ENCODE measurements at regions of chr11 and their contacts with region 1.

Region 1: DNA sequence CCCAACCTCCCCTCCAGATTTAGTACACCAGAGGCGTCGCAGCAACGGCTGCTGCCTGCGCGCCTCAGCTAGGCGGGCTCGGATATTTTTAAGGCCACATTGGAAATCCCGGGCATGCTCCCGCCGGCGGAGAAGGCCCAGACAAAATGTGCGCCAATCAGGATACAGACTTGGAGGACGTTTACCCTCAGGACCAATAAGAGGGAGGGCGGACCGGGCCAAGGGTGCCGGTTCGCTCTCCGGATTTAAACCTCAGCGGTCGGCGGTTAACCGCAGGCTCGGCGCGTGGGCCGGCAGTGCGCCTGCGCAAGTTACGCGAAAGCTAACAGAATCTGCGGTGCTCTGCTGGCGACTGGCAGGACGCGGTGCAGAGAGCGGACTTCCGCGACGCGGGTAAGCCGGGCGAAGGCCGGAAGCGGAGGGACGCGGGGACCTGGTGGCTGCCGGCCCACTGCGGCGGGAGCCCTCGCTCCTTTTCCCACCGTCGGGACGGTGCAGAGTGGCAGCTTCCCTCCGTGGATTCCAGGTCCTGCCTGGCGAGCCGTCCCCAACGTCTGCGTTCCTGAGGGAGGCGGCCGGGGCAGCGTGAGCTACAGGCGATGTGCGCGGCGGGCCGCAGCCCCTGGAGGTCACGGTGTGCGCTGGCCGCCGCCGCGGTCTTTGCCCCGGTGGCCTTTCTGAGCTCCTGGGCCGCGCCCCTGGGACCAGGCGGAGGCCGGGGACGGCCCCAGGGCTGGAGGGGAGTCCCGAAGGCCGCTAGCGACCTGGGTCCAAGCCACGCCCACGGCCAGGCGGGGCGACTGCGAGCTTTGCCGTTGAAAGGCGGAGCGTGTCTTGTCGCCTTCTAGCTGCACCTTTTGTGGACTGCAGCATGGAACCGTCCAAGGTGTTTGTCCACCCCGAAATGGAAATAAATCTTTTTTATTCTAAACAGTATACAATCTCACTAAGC is at the start of gene HYLS1:
- DNase-seq: peak; percentile 97
- ATAC-seq: peak; percentile 84
- H3K4me3 Mint-ChIP-seq: peak within 1 kb of the TSS; percentile 90
- H3K27ac Mint-ChIP-seq: peak within 1 kb of the TSS; percentile 98
- H3K4me1 Mint-ChIP-seq: peaks cover 18% of the 10 kb centered on the region
- H3K27me3 Mint-ChIP-seq: peaks cover 3% of the 10 kb centered on the region
- CTCF ChIP-seq: no peak
- total RNA-seq, gene HYLS1: 9.0 TPM in 2 replicates

Region 2: DNA sequence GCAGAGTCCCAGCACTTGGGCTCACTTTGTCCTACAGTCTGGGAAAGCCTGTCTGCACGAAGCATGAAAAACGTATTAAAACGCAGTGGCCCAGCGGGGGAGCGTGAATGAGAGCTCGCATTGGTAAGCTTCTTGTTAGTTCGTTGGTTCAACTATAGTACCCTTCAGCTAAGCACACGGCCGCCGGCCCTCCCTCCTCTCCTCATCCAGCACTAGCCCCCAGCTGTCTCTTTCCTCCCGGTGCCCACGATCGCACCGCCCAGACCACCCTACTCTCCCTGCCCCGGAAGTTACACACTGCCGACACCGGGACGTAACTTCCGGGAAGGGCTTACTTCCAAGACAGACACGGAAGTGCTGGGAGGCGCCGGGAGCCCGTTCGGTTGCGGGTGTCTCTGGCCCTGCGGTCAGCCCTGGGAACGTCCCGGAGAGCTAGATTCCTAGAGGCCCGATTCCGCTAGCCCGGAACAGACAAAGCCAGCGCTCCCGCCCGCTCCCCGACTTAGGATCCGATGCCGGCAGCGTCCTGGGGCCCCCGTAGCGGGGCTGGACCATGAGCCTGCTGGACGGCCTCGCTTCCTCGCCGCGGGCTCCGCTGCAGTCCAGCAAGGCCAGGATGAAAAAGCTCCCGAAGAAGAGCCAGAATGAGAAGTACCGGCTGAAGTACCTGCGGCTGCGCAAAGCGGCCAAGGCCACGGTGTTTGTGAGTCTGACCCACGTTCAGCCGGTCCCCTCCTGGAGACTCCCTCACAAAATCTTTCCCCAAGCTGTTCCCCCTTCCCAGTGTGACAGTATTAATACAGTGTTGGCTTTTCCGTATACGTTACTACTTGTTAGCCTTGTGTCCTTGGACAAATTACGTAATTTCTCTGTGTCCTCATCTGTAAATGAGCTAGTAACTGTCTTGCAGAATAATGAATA is 1264.9 kb before region 1 on chr11 and contains the start of gene TBRG1:
- CTCF ChIA-PET with region 1: no interaction called
- POLR2A ChIA-PET with region 1: interaction called, 4 read pairs
- intact Hi-C with region 1: loop called (anchors 2 kb)
- DNase-seq: peak; percentile 71
- ATAC-seq: peak; percentile 97
- H3K4me3 Mint-ChIP-seq: peak within 1 kb of the TSS; percentile 94
- H3K27ac Mint-ChIP-seq: peak within 1 kb of the TSS; percentile 91
- H3K4me1 Mint-ChIP-seq: peaks cover 27% of the 10 kb centered on the region
- H3K27me3 Mint-ChIP-seq: peaks cover 22% of the 10 kb centered on the region
- CTCF ChIP-seq: no peak
- total RNA-seq, gene TBRG1: 43.7 and 54.6 TPM in 2 replicates

Region 3: DNA sequence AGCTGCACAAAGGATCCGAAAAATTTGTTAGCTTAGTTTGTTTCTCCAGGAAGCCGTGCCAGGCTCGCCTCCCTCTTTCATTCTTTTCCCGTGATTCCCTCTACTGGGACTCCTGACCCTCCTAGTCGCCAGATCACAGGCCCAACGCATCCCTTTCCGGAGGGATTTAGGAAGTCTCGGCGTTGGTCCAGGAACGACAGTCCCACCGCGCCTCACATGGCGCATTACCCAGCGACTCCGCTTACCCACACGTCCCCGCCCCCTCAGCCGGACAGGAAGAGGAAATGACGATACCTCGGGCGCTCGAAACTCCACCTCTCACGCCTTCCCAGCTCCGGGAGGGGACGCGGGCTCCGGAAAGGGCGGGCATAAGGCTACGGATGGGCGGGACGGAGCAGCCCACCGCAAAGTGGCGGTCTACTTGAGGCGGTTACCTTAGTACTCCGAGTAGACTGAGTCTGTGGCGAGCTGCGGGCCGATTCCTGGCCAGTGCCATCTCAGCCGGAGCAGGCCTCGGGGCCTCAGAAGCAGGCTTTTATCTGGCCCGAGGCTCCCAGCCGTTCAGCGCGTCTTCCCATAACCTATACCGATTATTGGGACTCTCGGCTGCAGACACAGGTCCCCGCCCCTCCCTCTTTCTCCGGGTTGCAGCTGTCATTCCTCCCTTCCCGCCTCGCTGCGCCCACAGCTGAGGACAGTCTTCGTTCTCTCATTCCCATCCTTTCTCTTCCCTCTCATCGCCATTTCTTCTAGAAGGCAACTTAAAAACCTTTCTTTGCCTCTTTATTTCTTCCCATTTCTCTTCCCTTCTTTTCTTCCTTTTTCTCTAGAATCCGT is 933.7 kb before region 1 on chr11 and contains the start of gene CCDC15:
- CTCF ChIA-PET with region 1: no interaction called
- POLR2A ChIA-PET with region 1: interaction called, 8 read pairs
- intact Hi-C with region 1: loop called (anchors 5 kb)
- DNase-seq: peak; percentile 88
- ATAC-seq: peak; percentile 100
- H3K4me3 Mint-ChIP-seq: no peak within 1 kb of the TSS
- H3K27ac Mint-ChIP-seq: no peak within 1 kb of the TSS
- H3K4me1 Mint-ChIP-seq: no peaks in the 10 kb centered on the region
- H3K27me3 Mint-ChIP-seq: peaks cover 4% of the 10 kb centered on the region
- CTCF ChIP-seq: no peak
- total RNA-seq, gene CCDC15: 0.51 and 0.71 TPM in 2 replicates

Region 4: DNA sequence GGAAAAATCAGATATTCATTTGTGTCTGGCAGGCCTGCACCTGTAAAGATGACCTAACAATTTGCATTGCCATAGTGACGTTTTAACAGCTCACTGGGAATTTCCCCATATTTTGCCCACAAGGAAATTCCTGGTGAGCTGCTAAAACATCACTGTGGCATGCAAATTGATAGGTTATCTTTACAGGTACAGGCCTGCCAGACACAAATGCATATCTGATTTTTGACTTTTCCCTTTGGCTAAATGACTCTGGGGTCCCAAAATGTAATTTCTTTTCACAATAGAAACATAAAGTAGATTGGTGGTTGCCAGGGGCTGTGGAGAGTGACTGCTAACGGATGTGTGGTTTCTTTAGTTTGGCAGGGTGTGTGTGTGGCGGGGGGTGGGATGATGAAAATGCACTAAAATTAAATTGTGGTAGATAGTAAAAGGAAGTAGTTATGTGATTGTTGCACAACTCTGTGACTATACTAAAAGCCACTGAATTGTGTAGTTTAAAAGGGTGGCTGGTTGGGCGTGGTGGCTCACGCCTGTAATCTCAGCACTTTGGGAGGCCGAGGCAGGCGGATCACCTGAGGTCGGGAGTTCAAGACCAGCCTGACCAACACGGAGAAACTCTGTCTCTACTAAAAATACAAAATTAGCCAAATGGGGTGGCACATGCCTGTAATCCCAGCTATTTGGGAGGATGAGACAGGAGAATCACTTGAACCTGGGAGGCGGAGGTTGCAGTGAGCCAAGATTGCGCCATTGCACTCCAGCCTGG is 373.1 kb before region 1 on chr11:
- CTCF ChIA-PET with region 1: no interaction called
- POLR2A ChIA-PET with region 1: interaction called, 5 read pairs
- intact Hi-C with region 1: loop called (anchors 1 kb)
- DNase-seq: peak; percentile 27
- ATAC-seq: peak; percentile 80
- H3K4me3 Mint-ChIP-seq: peak overlapping the region; percentile 21
- H3K27ac Mint-ChIP-seq: peak overlapping the region; percentile 92
- H3K4me1 Mint-ChIP-seq: peaks cover 45% of the 10 kb centered on the region
- H3K27me3 Mint-ChIP-seq: no peaks in the 10 kb centered on the region
- CTCF ChIP-seq: no peak

Region 5: DNA sequence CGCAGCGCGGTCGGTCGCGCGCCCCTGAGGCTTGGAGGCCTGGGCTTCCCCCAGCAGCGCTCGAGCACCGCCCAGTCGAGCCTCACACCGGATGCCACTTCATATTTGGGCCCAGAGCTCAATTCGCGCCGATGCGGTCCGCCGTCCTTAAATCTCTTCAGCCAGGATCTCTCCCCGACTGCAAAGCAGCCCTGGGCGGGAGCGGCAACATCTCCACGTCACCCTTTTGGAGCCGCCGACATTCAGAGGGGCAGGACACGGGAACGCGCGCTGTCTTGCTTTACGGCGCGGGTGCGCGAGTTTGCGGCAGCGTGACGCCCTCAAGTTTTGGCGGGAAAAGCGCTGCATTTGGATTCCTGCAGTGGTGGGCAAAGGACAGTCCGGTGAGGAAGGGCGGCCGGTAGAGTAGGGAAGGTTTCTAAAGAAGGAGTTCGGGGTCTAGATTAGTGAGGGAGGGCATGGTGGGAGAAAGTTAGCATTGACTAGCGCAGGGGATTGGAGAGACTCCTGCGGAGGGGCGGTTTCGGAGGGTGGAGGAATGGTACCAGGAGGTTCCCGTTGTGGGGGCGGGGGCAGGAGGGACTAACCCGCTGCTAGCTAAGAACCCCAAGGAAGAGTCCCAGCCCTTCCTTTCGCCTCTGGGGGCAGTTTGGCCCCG is 261.9 kb before region 1 on chr11:
- CTCF ChIA-PET with region 1: interaction called, 3 read pairs
- POLR2A ChIA-PET with region 1: interaction called, 15 read pairs
- intact Hi-C with region 1: loop called (anchors 1 kb)
- DNase-seq: peak; percentile 80
- ATAC-seq: peak; percentile 93
- H3K4me3 Mint-ChIP-seq: peak overlapping the region; percentile 91
- H3K27ac Mint-ChIP-seq: peak overlapping the region; percentile 98
- H3K4me1 Mint-ChIP-seq: peaks cover 20% of the 10 kb centered on the region
- H3K27me3 Mint-ChIP-seq: no peaks in the 10 kb centered on the region
- CTCF ChIP-seq: no peak

Region 6: DNA sequence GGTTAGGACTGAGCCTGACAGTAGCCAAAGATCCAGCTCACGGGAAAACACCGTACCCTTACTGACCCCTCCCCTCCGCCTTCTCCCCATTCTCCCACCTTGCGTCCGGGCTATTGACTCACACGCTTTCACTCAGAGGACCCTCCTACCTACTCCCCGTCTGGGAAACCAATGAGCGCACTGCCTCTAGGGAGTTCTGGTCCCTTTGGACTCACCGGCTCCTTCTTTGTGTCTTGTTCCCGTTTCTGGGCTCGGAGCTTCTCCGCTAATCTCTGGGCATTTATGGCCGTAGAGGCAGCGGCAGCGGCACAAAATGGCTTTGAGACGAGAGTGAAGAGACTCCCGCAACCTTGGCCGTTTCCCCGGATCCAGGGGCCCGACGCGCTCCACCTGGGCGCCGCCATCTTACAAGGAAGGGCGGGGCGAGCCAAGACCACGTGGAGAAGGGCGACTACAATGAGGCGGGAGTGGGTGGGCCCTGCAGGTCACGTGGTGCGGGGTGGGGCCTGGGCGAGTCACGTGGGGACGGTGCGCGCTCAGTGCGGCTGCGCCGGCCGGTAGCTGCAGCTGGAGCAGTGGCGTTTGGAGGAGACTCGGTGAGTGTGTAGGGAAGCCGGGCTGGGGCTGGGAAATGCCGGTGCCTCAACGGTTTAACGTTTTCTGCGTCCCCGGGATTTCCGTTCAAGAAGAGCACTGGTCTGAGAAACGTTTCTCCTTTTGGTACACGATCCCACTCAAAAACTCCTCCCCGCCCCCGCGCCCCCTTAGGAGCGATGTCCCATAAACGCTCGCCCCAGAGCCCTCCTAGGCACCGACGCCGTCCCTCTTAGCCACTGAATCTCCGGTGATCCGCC is 323.8 kb after region 1 on chr11 and contains the starts of genes FAM118B and RPUSD4:
- CTCF ChIA-PET with region 1: no interaction called
- POLR2A ChIA-PET with region 1: interaction called, 4 read pairs
- intact Hi-C with region 1: loop called (anchors 1 kb)
- DNase-seq: peak; percentile 99
- ATAC-seq: peak; percentile 93
- H3K4me3 Mint-ChIP-seq: peak within 1 kb of the TSS; percentile 99
- H3K27ac Mint-ChIP-seq: peak within 1 kb of the TSS; percentile 97
- H3K4me1 Mint-ChIP-seq: peaks cover 28% of the 10 kb centered on the region
- H3K27me3 Mint-ChIP-seq: no peaks in the 10 kb centered on the region
- CTCF ChIP-seq: no peak
- total RNA-seq, gene FAM118B: 8.7 and 11.7 TPM in 2 replicates
- total RNA-seq, gene RPUSD4: 48.8 and 58.2 TPM in 2 replicates